Posterior vena cava (tissue), 2 donors: ENCODE measurements at regions of chr11 and their contacts with region 1.

Region 1: DNA sequence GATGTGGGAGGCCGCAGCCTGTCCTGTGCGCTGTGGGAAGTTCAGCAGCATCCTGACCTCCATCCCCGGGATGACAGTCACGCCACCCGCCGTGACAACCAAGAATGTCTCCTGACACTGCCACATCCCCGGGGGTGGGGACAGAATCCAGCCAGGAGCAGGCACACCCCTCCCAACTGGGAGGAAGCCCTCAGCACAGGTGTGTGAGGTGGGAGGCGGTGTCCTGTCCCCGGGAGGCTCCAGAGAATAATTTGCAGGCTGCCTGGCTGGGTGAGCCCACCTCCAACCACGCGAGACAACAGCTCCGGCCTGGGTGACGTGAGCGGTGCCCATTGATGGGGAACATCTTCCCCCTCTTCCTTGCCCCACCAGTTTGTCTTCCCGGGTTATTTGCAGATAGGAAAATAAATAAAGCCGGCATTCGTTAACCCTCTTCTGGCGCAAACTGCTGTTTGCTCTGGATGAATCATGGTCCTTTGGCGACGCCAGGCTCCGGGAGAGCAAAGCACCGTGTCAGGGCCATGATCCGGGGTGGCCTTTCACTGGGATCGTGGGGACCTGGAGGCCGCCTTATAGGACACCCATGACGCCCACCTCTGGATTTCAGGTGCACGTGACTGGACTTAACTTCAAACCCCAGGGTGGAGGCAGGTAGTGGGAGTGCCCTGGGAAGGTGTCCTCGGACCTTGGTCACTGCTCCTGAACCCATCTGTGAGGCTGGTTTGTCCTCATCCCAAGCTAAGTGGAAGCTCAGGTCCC is 13.8 kb downstream of the CCND1 start:
- DNase-seq: peak; percentile 55

Region 2: DNA sequence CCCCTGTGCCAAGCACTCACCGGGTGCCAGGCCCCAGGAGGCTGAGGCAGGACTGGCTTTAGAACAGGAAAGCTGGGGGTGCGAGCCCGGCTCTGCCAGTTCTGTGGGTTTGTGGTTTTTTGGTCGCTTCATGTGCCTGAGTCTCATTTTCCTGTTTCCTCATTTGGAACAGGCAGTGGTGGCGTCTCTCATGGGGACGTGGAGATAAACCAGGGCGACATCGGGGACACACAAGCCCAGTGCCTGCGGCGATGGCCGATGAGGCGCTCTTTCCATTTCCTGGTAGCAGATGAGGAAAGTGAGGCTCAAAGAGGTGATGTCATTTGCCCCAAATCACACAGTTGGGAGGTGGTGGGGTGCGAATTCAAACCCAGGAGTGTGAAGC is 1512.7 kb before region 1 on chr11:
- intact Hi-C with region 1: loop called in 1 of 2 experiments (anchors 5 kb)
- DNase-seq: no peak

Region 3: GRCh38 chr11:69567951-69568808 is 86.6 kb before region 1 on chr11:
- intact Hi-C with region 1: no loop called
- DNase-seq: no peak

Region 4: DNA sequence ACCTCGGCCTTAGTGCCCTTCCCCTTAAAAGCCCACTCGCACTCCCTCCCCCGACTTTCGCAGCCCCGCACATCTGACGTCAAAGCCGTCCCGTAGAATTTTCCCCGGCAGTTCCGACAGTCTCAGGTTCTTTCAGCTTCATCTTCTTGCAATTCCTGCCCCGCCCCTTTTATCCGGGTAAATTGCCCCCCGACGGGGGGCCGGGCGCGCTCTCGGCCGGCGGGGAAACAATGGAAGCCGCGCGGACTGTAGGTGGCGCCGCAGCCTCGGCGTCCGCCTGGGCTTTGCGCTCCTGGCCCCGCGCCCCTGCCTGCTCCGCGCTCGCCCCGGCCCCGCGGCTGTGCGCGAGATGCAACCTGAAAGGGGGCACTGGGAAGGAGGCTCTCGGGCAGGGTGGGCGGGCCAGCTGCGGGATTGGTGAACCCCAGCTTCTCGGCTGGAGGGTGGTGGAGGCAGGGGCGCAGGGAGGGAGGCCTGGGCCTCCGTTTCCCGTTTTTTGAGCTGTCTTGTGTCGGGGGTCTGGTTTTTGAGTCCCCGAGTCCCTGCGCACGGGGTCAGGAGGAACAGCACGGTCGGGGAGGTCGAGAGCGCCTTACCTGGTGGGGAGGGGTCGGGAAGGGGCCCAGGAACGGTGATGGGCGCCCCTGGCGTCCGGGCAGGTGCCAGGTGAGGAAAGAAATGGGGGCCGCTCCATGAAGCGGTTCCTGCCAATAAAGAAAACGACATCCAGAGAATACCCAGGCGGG is 49.9 kb after region 1 on chr11:
- intact Hi-C with region 1: no loop called
- DNase-seq: no peak